Heart right ventricle (tissue), 16 donors: ENCODE measurements at regions of chr15 and their contacts with region 1.

Region 1: GRCh38 chr15:86849558-86850285 is 770.1 kb downstream of the AGBL1 start:
- DNase-seq: peak; percentile 16 to 57
- ATAC-seq: peak; percentile 88 to 98 (median 95)
- H3K4me3 ChIP-seq: no peak overlapping the region
- H3K27ac ChIP-seq: peak overlapping the region in 7 of 10 donors; percentile 11 to 69 (median 52)
- H3K4me1 ChIP-seq: peaks cover 0 to 25% (median 15%) of the 10 kb centered on the region in 9 donors
- H3K27me3 ChIP-seq: no peaks in the 10 kb centered on the region
- CTCF ChIP-seq: no peak

Region 2: GRCh38 chr15:86903642-86904421 is 54.1 kb after region 1 on chr15:
- intact Hi-C with region 1: no loop called
- DNase-seq: no peak
- ATAC-seq: peak in 1 of 8 donors; percentile 60
- H3K4me3 ChIP-seq: no peak overlapping the region
- H3K27ac ChIP-seq: no peak overlapping the region
- H3K4me1 ChIP-seq: peaks cover 0 to 5% (median 0%) of the 10 kb centered on the region in 9 donors
- H3K27me3 ChIP-seq: no peaks in the 10 kb centered on the region
- CTCF ChIP-seq: no peak

Region 3: DNA sequence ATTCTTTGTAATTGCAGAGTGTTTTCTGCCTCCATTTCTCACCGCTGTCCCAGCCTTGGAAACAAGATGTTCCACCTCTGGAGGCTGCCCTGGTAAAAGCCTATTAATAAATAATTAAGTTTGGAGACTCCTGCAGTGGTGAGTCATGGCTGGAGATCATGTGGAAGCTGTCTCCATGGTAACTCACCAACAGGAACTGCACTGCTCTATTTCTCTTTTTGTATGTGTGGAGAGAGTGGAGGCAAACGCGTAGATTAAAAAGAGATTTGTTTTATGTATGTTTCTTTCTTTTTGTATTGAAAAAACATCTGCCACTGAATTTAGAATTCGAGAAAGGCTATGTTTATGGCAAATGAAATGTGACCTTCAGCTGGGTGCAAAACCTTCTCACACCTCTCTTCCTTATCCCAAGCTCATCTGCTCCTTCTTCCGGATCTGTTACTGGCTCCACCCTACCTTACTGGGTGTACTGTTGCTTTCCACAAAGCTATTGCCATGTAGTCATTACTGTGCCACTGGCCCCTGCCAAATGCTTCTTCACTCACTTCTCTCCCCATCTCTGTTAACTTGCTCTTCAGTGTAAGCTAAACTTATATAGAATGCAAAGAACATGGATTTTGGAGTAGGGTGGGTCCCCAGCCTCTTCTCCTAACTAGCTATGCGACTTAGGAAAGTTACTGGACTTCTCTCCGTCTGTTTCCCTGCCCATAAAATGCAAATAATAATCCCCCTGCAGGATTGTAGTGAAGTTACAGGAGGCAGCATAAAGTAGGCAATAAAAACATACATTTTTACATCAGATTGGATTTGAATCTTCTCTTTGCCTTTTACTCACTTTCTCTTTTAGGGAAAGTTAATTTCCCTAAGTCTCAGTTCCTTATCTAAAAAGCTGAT is 628.3 kb after region 1 on chr15:
- intact Hi-C with region 1: loop called in 1 of 10 experiments (anchors 10 kb)
- DNase-seq: peak in 1 of 2 donors; percentile 57
- ATAC-seq: peak; percentile 89 to 99 (median 96)
- H3K4me3 ChIP-seq: peak overlapping the region in 1 of 10 donors; percentile 15
- H3K27ac ChIP-seq: peak overlapping the region in 5 of 10 donors; percentile 21 to 63 (median 47)
- H3K4me1 ChIP-seq: peaks cover 0 to 20% (median 3%) of the 10 kb centered on the region in 9 donors
- H3K27me3 ChIP-seq: no peaks in the 10 kb centered on the region
- CTCF ChIP-seq: no peak